ENCODE measurements at regions of chr1 and their contacts with region 1.

Region 1: GRCh38 chr1:54944610-54945544 is 35.6 kb upstream of the TMEM61 start:
- DNase-seq: peak; percentile 85
- ATAC-seq: peak; percentile 86
- H3K4me3 Mint-ChIP-seq: no peak overlapping the region
- H3K27ac Mint-ChIP-seq: no peak overlapping the region
- H3K4me1 Mint-ChIP-seq: peaks cover 6% of the 10 kb centered on the region
- H3K27me3 Mint-ChIP-seq: no peaks in the 10 kb centered on the region
- CTCF ChIP-seq: peak; percentile 67

Region 2: GRCh38 chr1:54663725-54664124 is 281.2 kb before region 1 on chr1:
- CTCF ChIA-PET with region 1: no interaction called
- POLR2A ChIA-PET with region 1: no interaction called
- intact Hi-C with region 1: no loop called
- DNase-seq: no peak
- ATAC-seq: no peak
- H3K4me3 Mint-ChIP-seq: no peak overlapping the region
- H3K27ac Mint-ChIP-seq: no peak overlapping the region
- H3K4me1 Mint-ChIP-seq: no peaks in the 10 kb centered on the region
- H3K27me3 Mint-ChIP-seq: no peaks in the 10 kb centered on the region
- CTCF ChIP-seq: no peak

Region 3: DNA sequence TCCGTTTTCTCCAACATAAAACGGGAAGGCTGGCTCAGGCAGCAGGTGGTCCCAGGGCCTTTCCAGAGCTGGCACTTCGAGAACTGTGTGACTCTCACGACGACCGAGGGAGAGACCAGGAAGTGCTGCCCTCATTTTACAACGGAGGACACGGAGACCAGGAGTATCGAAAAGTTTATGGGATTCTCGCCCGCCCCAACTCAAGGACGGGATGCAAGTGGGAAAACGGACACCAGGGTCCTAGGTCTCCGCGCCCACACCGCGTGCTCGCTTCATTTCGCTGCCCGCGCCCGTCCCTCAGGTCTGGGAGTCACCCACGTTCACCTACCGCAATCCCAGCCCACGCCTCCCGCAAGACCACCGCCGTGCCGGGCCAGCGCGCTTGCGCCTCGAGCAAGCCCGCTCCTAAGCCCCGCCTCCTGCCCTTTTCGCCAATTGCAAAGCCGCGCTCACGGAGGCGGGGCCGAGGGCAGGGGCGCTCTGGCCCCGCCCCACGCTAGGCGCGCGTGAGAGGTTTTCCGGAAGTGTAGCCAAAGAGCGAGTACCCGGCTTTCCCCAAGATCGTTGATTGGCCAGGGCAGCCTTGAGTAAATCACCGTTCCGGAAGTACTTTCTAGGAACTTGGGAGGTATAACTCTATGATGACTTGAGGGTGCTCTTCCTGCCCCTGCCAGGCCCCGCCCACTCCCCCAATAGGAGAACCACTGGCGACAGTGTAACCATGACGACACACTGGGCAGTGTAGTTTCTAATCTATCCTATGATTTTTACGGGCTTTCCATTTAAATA is 180.6 kb before region 1 on chr1 and contains the start of gene PARS2:
- CTCF ChIA-PET with region 1: no interaction called
- POLR2A ChIA-PET with region 1: no interaction called
- intact Hi-C with region 1: no loop called
- DNase-seq: peak; percentile 98
- ATAC-seq: peak; percentile 96
- H3K4me3 Mint-ChIP-seq: peak within 1 kb of the TSS; percentile 91
- H3K27ac Mint-ChIP-seq: peak within 1 kb of the TSS; percentile 94
- H3K4me1 Mint-ChIP-seq: peaks cover 21% of the 10 kb centered on the region
- H3K27me3 Mint-ChIP-seq: no peaks in the 10 kb centered on the region
- CTCF ChIP-seq: no peak
- total RNA-seq, gene PARS2: 6.0 to 6.7 TPM

Region 4: GRCh38 chr1:54928327-54928726 is 16.6 kb before region 1 on chr1:
- CTCF ChIA-PET with region 1: interaction called, 25 read pairs
- POLR2A ChIA-PET with region 1: interaction called, 3 read pairs
- intact Hi-C with region 1: no loop called
- DNase-seq: no peak
- ATAC-seq: no peak
- H3K4me3 Mint-ChIP-seq: no peak overlapping the region
- H3K27ac Mint-ChIP-seq: no peak overlapping the region
- H3K4me1 Mint-ChIP-seq: no peaks in the 10 kb centered on the region
- H3K27me3 Mint-ChIP-seq: no peaks in the 10 kb centered on the region
- CTCF ChIP-seq: no peak

Region 5: DNA sequence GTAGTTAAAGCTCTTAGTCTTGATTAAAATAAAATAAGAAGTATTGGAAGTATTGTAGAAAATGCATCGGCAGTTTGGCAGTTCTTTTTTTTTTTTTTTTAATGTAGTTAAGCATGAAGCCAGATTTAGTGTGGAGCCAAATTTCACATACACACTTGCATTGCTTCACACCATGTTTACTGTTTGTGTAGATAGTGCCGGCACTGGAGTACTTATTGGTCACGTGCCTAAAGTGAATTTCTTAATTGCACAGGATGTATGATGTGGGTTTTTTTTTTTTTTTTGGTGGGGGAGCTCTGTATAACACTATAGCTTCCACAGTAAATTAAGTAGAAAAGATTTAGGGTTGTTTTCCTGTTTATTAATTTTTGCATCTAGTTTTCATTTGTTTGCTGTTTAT is 14.4 kb after region 1 on chr1:
- CTCF ChIA-PET with region 1: interaction called, 24 read pairs
- POLR2A ChIA-PET with region 1: no interaction called
- intact Hi-C with region 1: no loop called
- DNase-seq: no peak
- ATAC-seq: no peak
- H3K4me3 Mint-ChIP-seq: no peak overlapping the region
- H3K27ac Mint-ChIP-seq: no peak overlapping the region
- H3K4me1 Mint-ChIP-seq: no peaks in the 10 kb centered on the region
- H3K27me3 Mint-ChIP-seq: peaks cover 1% of the 10 kb centered on the region
- CTCF ChIP-seq: no peak

Region 6: GRCh38 chr1:54977533-54978297 is 32.8 kb after region 1 on chr1:
- CTCF ChIA-PET with region 1: interaction called, 12 read pairs
- POLR2A ChIA-PET with region 1: no interaction called
- intact Hi-C with region 1: no loop called
- DNase-seq: no peak
- ATAC-seq: no peak
- H3K4me3 Mint-ChIP-seq: no peak overlapping the region
- H3K27ac Mint-ChIP-seq: no peak overlapping the region
- H3K4me1 Mint-ChIP-seq: peaks cover 2% of the 10 kb centered on the region
- H3K27me3 Mint-ChIP-seq: peaks cover 32% of the 10 kb centered on the region
- CTCF ChIP-seq: no peak

Region 7: DNA sequence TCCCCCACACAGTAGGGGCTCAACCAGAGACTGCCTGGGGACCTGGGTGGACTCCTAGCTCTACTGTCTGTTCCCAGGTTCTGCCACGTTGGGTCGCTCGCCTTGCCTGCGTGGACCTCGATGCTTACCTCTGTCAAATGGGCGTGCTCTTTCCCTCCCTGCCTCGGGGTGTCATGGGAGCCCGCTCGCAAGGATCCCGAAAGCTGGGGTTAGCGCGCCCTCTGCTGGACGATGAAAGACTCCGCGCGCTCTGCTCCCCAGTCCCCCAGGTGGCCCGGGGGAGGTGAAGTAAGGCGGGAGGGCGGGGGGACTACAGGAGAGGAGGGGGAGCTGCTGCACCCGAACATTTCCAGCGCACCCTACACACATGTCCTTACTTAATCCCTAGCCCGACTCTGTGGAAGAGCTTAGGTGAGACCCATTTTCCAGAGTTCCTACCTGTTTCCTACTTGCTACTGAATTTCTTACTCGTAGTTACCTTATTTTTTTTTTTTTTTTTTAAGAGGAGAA is 51.5 kb after region 1 on chr1:
- CTCF ChIA-PET with region 1: interaction called, 64 read pairs
- POLR2A ChIA-PET with region 1: interaction called, 4 read pairs
- intact Hi-C with region 1: loop called (anchors 2 kb)
- DNase-seq: peak; percentile 85
- ATAC-seq: peak; percentile 91
- H3K4me3 Mint-ChIP-seq: no peak overlapping the region
- H3K27ac Mint-ChIP-seq: no peak overlapping the region
- H3K4me1 Mint-ChIP-seq: peaks cover 24% of the 10 kb centered on the region
- H3K27me3 Mint-ChIP-seq: peaks cover 42% of the 10 kb centered on the region
- CTCF ChIP-seq: peak; percentile 88

Region 8: GRCh38 chr1:55021965-55022546 is 77.2 kb after region 1 on chr1:
- CTCF ChIA-PET with region 1: interaction called, 63 read pairs
- POLR2A ChIA-PET with region 1: no interaction called
- intact Hi-C with region 1: loop called (anchors 5 kb)
- DNase-seq: peak; percentile 83
- ATAC-seq: peak; percentile 100
- H3K4me3 Mint-ChIP-seq: no peak overlapping the region
- H3K27ac Mint-ChIP-seq: no peak overlapping the region
- H3K4me1 Mint-ChIP-seq: no peaks in the 10 kb centered on the region
- H3K27me3 Mint-ChIP-seq: peaks cover 1% of the 10 kb centered on the region
- CTCF ChIP-seq: peak; percentile 86